ENCODE measurements at regions of chr1 and their contacts with region 1.

Region 1: DNA sequence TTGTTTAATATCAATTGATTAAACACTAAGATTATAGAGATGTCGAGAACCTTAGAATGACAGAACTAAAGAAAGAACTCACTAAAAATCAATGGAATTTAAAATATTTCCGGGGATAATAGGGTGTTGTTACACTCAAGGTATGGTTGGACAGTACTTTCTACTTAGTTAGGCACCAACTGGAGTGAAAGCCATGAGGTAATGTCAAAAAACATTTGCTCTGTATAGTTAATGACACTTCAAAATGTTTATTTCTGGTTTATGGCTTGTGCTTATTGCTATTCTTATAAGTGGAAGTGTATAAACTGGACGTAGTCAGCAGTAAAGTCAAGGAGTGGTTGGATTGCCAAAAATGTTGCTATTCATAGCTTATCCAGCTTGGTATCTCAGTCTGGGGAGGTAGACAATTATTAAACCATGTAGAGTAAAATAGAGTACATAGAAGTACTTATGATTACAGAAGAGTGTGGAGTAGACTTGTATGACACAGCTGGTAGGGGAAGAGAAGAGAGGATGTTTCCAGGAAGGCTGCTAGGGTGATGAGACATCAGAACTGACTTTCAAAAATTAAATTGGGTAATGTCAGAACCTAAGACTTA is 56.5 kb upstream of the BMP8A start:
- DNase-seq: no peak
- ATAC-seq: peak; percentile 94

Region 2: DNA sequence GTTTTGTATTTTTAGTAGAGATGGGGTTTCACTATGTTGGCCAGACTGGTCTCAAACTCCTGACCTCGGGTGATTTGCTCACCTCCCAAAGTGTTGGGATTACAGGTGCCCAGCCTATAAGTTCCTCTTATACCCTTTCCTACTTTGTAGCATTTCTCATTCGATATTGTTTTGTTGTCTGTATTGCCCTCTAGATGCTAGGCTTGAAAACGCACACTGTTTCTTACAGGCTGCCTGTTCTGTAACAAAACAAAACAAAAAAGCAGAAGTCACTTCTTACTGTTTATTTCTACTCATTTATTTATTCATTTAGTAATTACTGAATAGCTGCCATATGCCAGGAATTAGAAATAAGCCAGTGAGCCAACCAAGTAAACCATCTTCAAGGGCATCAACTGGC is 80.3 kb before region 1 on chr1:
- intact Hi-C with region 1: loop called (anchors 10 kb)
- DNase-seq: no peak
- ATAC-seq: no peak